Dorsolateral prefrontal cortex (tissue), 120 donors: ENCODE measurements at regions of chr6 and their contacts with region 1.

Region 1: DNA sequence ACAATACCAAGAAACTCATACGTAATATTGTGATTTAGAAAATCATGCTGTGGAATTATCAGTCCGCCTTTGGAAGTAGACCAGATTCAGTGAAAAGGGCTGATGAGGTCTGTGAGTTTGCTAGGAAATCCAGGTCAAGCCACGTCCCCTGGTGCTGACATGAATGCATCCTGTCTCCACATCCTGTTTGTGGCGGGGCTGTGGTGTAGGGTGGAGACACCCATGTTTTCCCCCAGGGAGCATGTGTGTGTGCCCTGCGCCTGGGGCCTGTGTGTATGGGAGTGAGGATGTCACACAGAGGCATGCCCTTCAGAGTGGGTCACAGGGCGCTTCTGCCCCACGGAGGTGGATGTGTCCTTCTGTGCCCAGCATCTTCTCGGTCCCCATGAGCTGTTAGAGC is 109.1 kb downstream of the SASH1 start:
- DNase-seq: no peak
- H3K4me3 ChIP-seq: no peak overlapping the region
- H3K27ac ChIP-seq: peak overlapping the region in 17 of 59 donors; percentile 2 to 91 (median 57)
- H3K27me3 ChIP-seq: no peaks in the 10 kb centered on the region
- CTCF ChIP-seq: no peak

Region 2: GRCh38 chr6:146931208-146931607 is 1520.5 kb before region 1 on chr6:
- intact Hi-C with region 1: no loop called
- DNase-seq: no peak
- H3K4me3 ChIP-seq: no peak overlapping the region
- H3K27ac ChIP-seq: no peak overlapping the region
- H3K27me3 ChIP-seq: no peaks in the 10 kb centered on the region
- CTCF ChIP-seq: no peak

Region 3: DNA sequence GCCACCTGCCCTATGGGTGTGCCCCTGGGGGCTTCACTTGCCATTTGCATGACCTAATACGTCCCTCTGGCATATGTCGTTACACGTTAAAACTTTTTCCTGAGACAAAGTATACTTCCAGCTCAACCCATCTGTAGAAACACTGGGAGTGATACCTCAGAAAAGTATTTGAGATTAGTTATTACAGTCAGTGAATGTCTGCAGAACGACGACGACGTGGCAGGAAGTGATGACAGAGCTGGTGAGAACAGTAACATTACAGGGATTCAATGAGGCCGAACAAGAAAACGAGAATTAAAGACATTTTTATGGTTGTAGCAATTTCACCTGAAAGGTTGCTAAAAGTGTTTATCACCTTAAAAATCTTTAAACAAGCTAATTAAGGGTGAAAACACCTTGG is 68.8 kb before region 1 on chr6:
- intact Hi-C with region 1: no loop called
- DNase-seq: no peak
- H3K4me3 ChIP-seq: peak overlapping the region in 1 of 59 donors; percentile 35
- H3K27ac ChIP-seq: peak overlapping the region in 43 of 59 donors; percentile 0 to 92 (median 68)
- H3K27me3 ChIP-seq: no peaks in the 10 kb centered on the region
- CTCF ChIP-seq: no peak

Region 4: GRCh38 chr6:148407372-148407771 is 44.3 kb before region 1 on chr6:
- intact Hi-C with region 1: loop called in 1 of 2 experiments (anchors 5 kb)
- DNase-seq: no peak
- H3K4me3 ChIP-seq: no peak overlapping the region
- H3K27ac ChIP-seq: peak overlapping the region in 50 of 59 donors; percentile 5 to 84 (median 64)
- H3K27me3 ChIP-seq: no peaks in the 10 kb centered on the region
- CTCF ChIP-seq: no peak

Region 5: GRCh38 chr6:148432462-148433195 is 19.1 kb before region 1 on chr6:
- intact Hi-C with region 1: no loop called
- DNase-seq: peak in 1 of 10 donors; percentile 33
- H3K4me3 ChIP-seq: no peak overlapping the region
- H3K27ac ChIP-seq: peak overlapping the region in 44 of 59 donors; percentile 0 to 70 (median 31)
- H3K27me3 ChIP-seq: no peaks in the 10 kb centered on the region
- CTCF ChIP-seq: no peak

Region 6: DNA sequence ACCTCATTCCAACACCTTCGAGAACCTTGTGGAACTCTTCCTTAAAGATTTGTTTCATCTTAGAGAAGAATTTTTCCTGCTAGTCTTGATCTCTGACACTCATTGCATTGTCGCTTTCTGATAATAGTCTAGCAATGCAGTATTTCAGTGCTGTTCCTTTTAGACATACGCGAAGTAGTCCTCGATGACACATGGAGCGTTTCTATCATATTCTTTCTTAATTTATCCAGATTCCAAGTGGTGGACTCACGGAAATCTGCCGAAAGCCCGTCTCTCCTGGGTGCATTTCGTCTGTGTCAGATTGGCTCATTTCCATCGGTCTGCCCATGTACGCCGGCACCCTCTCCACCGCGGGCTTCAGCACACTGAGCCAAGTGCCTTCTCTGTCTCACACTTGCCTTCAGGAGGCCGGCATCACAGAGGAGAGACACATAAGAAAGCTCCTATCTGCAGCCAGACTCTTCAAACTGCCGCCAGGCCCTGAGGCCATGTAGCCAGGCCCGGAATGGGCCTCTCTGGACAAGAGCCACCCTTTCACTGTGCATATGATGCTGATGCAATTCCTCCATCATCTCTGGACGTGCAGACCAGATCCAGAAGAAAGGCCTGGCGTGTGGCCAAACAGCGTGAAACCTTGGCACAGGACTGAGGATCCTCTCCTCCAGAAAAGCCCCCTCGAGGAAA is 96.5 kb after region 1 on chr6:
- intact Hi-C with region 1: no loop called
- DNase-seq: peak in 5 of 10 donors; percentile 38 to 69 (median 52)
- H3K4me3 ChIP-seq: no peak overlapping the region
- H3K27ac ChIP-seq: peak overlapping the region; percentile 66 to 94 (median 84)
- H3K27me3 ChIP-seq: no peaks in the 10 kb centered on the region
- CTCF ChIP-seq: no peak